ENCODE measurements at regions of chr1 and their contacts with region 1.

Region 1: GRCh38 chr1:84442256-84442655 is 36.8 kb upstream of the RPF1 start:
- DNase-seq: no peak
- H3K4me3 Mint-ChIP-seq: no peak overlapping the region
- H3K27ac Mint-ChIP-seq: no peak overlapping the region
- H3K4me1 Mint-ChIP-seq: peaks cover 25% of the 10 kb centered on the region
- H3K27me3 Mint-ChIP-seq: no peaks in the 10 kb centered on the region

Region 2: GRCh38 chr1:84478876-84479868 is 36.9 kb after region 1 on chr1 and contains the start of gene RPF1:
- CTCF ChIA-PET with region 1: interaction called, 9 read pairs
- intact Hi-C with region 1: loop called (anchors 1 kb)
- DNase-seq: peak; percentile 74
- H3K4me3 Mint-ChIP-seq: peak within 1 kb of the TSS; percentile 99
- H3K27ac Mint-ChIP-seq: peak within 1 kb of the TSS; percentile 95
- H3K4me1 Mint-ChIP-seq: peaks cover 34% of the 10 kb centered on the region
- H3K27me3 Mint-ChIP-seq: peaks cover 18% of the 10 kb centered on the region
- total RNA-seq, gene RPF1: 57.2 to 57.6 TPM

Region 3: GRCh38 chr1:84541679-84542078 is 99.4 kb after region 1 on chr1:
- CTCF ChIA-PET with region 1: interaction called, 3 read pairs
- intact Hi-C with region 1: loop called (anchors 1 kb)
- DNase-seq: no peak
- H3K4me3 Mint-ChIP-seq: no peak overlapping the region
- H3K27ac Mint-ChIP-seq: no peak overlapping the region
- H3K4me1 Mint-ChIP-seq: peaks cover 12% of the 10 kb centered on the region
- H3K27me3 Mint-ChIP-seq: no peaks in the 10 kb centered on the region

Region 4: GRCh38 chr1:84724128-84724860 is 282.0 kb after region 1 on chr1:
- CTCF ChIA-PET with region 1: interaction called, 10 read pairs
- intact Hi-C with region 1: loop called (anchors 1 kb)
- DNase-seq: peak; percentile 63
- H3K4me3 Mint-ChIP-seq: no peak overlapping the region
- H3K27ac Mint-ChIP-seq: no peak overlapping the region
- H3K4me1 Mint-ChIP-seq: peaks cover 3% of the 10 kb centered on the region
- H3K27me3 Mint-ChIP-seq: no peaks in the 10 kb centered on the region

Region 5: GRCh38 chr1:84936116-84936810 is 494.0 kb after region 1 on chr1:
- CTCF ChIA-PET with region 1: interaction called, 3 read pairs
- intact Hi-C with region 1: loop called (anchors 1 kb)
- DNase-seq: peak; percentile 43
- H3K4me3 Mint-ChIP-seq: no peak overlapping the region
- H3K27ac Mint-ChIP-seq: no peak overlapping the region
- H3K4me1 Mint-ChIP-seq: peaks cover 4% of the 10 kb centered on the region
- H3K27me3 Mint-ChIP-seq: no peaks in the 10 kb centered on the region